ENCODE measurements at regions of chr2 and their contacts with region 1.

Region 1: GRCh38 chr2:164388511-164388910 is 232.8 kb downstream of the GRB14 start:
- DNase-seq: peak; percentile 56 to 74
- H3K4me3 ChIP-seq: no peak overlapping the region; the same call in 1 of the 2 replicates
- H3K27ac ChIP-seq: peak overlapping the region; percentile 58
- H3K4me1 ChIP-seq: peaks cover 10% of the 10 kb centered on the region
- H3K27me3 ChIP-seq: no peaks in the 10 kb centered on the region
- CTCF ChIP-seq: no peak

Region 2: DNA sequence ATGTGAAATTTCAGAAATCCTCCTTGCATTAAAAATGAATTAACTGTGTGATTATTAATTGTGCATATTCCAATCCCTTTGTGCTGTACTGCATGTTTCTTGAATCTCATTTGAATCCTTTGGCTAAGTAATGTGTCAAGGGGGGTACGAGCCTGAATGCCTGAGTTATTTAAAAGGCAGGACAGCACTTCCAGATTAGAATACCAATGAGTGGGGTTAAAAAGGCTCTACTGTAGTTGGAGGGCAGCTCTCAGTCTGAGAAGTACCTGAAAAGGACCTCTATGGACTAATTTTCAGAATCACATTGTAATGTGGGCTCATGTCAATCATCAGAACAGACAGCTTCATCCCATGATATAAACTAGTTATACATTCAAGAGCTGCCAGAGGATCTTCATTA is 190.3 kb before region 1 on chr2:
- CTCF ChIA-PET with region 1: no interaction called
- POLR2A ChIA-PET with region 1: no interaction called
- intact Hi-C with region 1: no loop called
- DNase-seq: no peak
- H3K4me3 ChIP-seq: no peak overlapping the region
- H3K27ac ChIP-seq: no peak overlapping the region
- H3K4me1 ChIP-seq: no peaks in the 10 kb centered on the region
- H3K27me3 ChIP-seq: no peaks in the 10 kb centered on the region
- CTCF ChIP-seq: no peak

Region 3: GRCh38 chr2:164302786-164303185 is 85.7 kb before region 1 on chr2:
- CTCF ChIA-PET with region 1: no interaction called
- POLR2A ChIA-PET with region 1: interaction called, 10 read pairs
- intact Hi-C with region 1: no loop called
- DNase-seq: no peak
- H3K4me3 ChIP-seq: no peak overlapping the region
- H3K27ac ChIP-seq: no peak overlapping the region
- H3K4me1 ChIP-seq: no peaks in the 10 kb centered on the region
- H3K27me3 ChIP-seq: no peaks in the 10 kb centered on the region
- CTCF ChIP-seq: no peak

Region 4: DNA sequence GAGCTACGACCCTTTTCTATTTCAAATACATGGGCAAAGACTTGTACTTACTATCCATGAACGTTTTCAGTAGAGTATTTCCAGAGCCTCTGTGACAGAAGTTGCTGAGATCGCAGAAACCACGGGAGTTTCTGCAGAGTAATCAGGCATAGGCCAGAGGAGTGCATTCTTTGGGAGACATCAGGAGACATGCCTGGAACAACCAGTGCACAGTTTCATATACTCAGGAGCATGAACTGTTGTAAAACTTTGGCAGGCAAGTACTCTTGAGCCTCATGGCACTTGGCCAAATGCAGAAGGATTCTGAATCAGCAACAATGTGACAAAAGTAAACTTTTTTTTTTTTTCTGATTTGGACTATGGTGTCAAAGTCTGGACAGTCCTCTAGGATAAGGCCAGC is 74.4 kb before region 1 on chr2:
- CTCF ChIA-PET with region 1: no interaction called
- POLR2A ChIA-PET with region 1: no interaction called
- intact Hi-C with region 1: no loop called
- DNase-seq: peak in 1 of 2 experiments; percentile 2
- H3K4me3 ChIP-seq: no peak overlapping the region
- H3K27ac ChIP-seq: no peak overlapping the region
- H3K4me1 ChIP-seq: no peaks in the 10 kb centered on the region
- H3K27me3 ChIP-seq: no peaks in the 10 kb centered on the region
- CTCF ChIP-seq: no peak

Region 5: GRCh38 chr2:164328310-164328709 is 60.2 kb before region 1 on chr2:
- CTCF ChIA-PET with region 1: no interaction called
- POLR2A ChIA-PET with region 1: no interaction called
- intact Hi-C with region 1: no loop called
- DNase-seq: no peak
- H3K4me3 ChIP-seq: no peak overlapping the region
- H3K27ac ChIP-seq: no peak overlapping the region
- H3K4me1 ChIP-seq: no peaks in the 10 kb centered on the region
- H3K27me3 ChIP-seq: no peaks in the 10 kb centered on the region
- CTCF ChIP-seq: no peak

Region 6: GRCh38 chr2:164420786-164421185 is 32.3 kb after region 1 on chr2:
- CTCF ChIA-PET with region 1: no interaction called
- POLR2A ChIA-PET with region 1: interaction called, 11 read pairs
- intact Hi-C with region 1: no loop called
- DNase-seq: no peak
- H3K4me3 ChIP-seq: no peak overlapping the region
- H3K27ac ChIP-seq: no peak overlapping the region
- H3K4me1 ChIP-seq: no peaks in the 10 kb centered on the region
- H3K27me3 ChIP-seq: no peaks in the 10 kb centered on the region
- CTCF ChIP-seq: no peak

Region 7: GRCh38 chr2:164620873-164621626 is 232.5 kb after region 1 on chr2 and contains the start of gene GRB14:
- CTCF ChIA-PET with region 1: no interaction called
- POLR2A ChIA-PET with region 1: interaction called, 12 read pairs
- intact Hi-C with region 1: no loop called
- DNase-seq: peak; percentile 59 to 79
- H3K4me3 ChIP-seq: peak within 1 kb of the TSS; percentile 63
- H3K27ac ChIP-seq: no peak within 1 kb of the TSS
- H3K4me1 ChIP-seq: no peaks in the 10 kb centered on the region; the same call in 1 of the 2 replicates
- H3K27me3 ChIP-seq: no peaks in the 10 kb centered on the region
- CTCF ChIP-seq: no peak
- total RNA-seq, gene GRB14: 2.8 and 3.4 TPM in 2 replicates

Measured in PC-9 (cell line).